PC-3 (cell line): ENCODE measurements at regions of chr1 and their contacts with region 1.

Region 1: DNA sequence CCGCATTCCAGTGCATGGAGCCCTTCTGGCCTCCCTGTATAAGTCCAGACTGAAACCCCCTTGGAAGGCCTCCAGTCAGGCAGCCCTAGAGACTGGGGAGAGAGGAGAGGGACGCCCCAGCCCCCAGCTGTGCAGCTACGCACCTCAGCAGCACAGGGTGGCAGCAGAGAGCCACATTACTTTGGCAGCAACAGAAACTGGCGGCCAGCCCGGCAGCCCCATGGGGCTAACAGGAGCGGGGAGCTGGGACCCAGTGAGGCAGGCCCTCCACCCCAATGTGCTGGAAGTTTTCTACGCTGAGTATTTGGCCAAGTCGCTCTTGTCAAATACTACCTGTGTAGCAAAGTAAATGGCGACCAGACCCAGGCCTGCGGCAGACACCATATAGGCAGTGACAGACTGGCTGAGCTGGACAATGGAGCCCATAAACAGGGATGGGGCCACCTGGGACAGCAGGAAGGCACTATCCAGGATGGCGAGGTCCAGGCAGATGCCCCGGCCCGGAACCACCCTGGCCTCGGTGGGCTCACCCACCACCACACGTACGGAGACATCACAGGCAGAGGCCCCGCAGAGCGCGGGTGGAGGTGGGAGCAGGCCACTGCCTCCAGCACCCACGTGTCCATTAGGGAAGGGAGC is 21.2 kb downstream of the SLC45A3 start:
- DNase-seq: peak; percentile 85
- ATAC-seq: peak; percentile 75
- H3K4me3 ChIP-seq: no peak overlapping the region
- H3K27ac ChIP-seq: no peak overlapping the region
- H3K4me1 ChIP-seq: peaks cover 8% of the 10 kb centered on the region
- H3K27me3 ChIP-seq: no peaks in the 10 kb centered on the region
- CTCF ChIP-seq: peak; percentile 97

Region 2: DNA sequence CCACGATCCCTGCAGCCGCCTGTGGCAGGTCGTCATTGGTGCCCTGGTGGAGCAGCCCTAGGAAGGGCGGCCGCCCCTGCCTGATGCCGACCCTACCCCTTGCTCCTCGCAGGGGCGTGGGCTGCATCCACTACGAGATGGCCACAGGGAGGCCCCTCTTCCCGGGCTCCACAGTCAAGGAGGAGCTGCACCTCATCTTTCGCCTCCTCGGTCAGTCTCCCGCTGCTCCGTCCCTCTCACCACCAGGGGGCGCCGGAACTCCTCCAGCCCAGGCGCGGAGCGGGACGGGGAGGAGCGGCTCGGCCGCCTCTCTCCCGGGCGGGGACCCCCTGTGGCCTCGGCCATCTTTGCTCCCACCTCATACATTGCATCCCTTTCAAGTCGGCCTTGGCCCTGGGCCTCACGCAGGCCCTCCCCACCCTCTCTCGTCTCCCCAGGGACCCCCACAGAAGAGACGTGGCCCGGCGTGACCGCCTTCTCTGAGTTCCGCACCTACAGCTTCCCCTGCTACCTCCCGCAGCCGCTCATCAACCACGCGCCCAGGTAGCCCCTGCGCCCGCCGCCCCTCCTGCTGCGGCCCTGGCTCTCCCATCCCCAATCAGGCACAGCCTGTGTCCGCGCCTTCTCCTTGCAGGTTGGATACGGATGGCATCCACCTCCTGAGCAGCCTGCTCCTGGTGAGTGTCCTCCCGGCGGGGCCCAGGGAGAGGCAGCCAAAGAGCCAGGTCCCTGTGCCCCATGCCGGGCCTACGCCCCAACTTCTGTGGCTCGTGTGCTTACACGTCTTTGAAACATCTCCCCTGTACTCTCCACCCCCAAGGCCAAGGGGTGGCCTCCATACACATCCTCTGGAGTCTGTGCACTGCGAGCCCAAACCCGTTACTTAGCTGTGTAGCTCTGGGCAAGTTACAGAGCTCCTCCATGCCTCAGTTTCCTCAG is 129.9 kb before region 1 on chr1:
- CTCF ChIA-PET with region 1: interaction called, 32 read pairs
- POLR2A ChIA-PET with region 1: no interaction called
- intact Hi-C with region 1: loop called (anchors 1 kb)
- DNase-seq: peak; percentile 92
- ATAC-seq: peak; percentile 94
- H3K4me3 ChIP-seq: peak overlapping the region; percentile 60
- H3K27ac ChIP-seq: no peak overlapping the region
- H3K4me1 ChIP-seq: peaks cover 12% of the 10 kb centered on the region
- H3K27me3 ChIP-seq: no peaks in the 10 kb centered on the region
- CTCF ChIP-seq: peak; percentile 97

Region 3: DNA sequence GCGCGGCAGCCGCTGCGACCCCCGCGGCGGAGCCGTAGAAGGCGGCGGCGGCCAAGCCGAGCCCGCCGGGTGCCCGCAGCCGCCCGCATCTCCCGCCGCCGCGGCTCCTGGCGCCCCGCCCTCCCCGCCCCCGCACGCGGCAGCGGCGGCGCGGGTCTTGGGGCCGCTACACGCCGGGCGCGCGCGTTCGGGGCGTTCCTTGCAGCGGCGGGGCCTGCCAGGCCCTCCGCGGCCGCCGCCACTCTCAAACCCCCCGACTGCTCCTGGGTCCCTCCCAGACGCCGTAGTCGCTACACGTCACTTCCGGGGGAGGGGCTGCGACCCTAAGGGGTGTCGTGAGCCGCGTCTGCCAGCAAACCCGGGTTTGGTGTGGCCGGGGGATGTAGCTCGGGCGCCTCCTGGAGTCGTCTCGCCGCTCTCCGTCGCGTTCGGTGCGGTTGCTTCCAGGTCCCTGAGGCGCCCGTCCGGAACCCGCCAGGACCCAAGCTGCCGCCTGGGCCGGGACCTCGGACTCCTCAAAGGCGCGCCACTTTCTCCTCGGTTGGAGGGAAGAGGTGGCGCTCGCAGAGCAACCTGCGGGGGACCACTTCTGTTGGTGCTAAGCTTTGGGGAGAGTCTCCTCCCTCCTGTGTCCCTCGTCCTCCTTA is 27.2 kb before region 1 on chr1 and contains the start of gene ELK4:
- CTCF ChIA-PET with region 1: interaction called, 10 read pairs
- POLR2A ChIA-PET with region 1: interaction called, 3 read pairs
- intact Hi-C with region 1: loop called (anchors 1 kb)
- DNase-seq: peak; percentile 99
- ATAC-seq: peak; percentile 79
- H3K4me3 ChIP-seq: peak within 1 kb of the TSS; percentile 86
- H3K27ac ChIP-seq: peak within 1 kb of the TSS; percentile 76
- H3K4me1 ChIP-seq: peaks cover 24% of the 10 kb centered on the region
- H3K27me3 ChIP-seq: no peaks in the 10 kb centered on the region
- CTCF ChIP-seq: peak; percentile 72
- total RNA-seq, gene ELK4: 16.3 and 16.4 TPM in 2 replicates

Region 4: GRCh38 chr1:205711104-205712020 is 52.3 kb after region 1 on chr1:
- CTCF ChIA-PET with region 1: interaction called, 70 read pairs
- POLR2A ChIA-PET with region 1: no interaction called
- intact Hi-C with region 1: loop called (anchors 1 kb)
- DNase-seq: peak; percentile 93
- ATAC-seq: peak; percentile 86
- H3K4me3 ChIP-seq: no peak overlapping the region
- H3K27ac ChIP-seq: no peak overlapping the region
- H3K4me1 ChIP-seq: peaks cover 9% of the 10 kb centered on the region; the same call in 1 of the 2 replicates
- H3K27me3 ChIP-seq: no peaks in the 10 kb centered on the region
- CTCF ChIP-seq: peak; percentile 99

Region 5: GRCh38 chr1:205750138-205751035 is 91.3 kb after region 1 on chr1 and contains the start of gene NUCKS1:
- CTCF ChIA-PET with region 1: no interaction called
- POLR2A ChIA-PET with region 1: no interaction called
- intact Hi-C with region 1: no loop called
- DNase-seq: peak; percentile 99
- ATAC-seq: peak; percentile 78
- H3K4me3 ChIP-seq: peak within 1 kb of the TSS; percentile 86
- H3K27ac ChIP-seq: peak within 1 kb of the TSS; percentile 81
- H3K4me1 ChIP-seq: peaks cover 25% of the 10 kb centered on the region
- H3K27me3 ChIP-seq: no peaks in the 10 kb centered on the region
- CTCF ChIP-seq: no peak
- total RNA-seq, gene NUCKS1: 101 and 122 TPM in 2 replicates

Region 6: DNA sequence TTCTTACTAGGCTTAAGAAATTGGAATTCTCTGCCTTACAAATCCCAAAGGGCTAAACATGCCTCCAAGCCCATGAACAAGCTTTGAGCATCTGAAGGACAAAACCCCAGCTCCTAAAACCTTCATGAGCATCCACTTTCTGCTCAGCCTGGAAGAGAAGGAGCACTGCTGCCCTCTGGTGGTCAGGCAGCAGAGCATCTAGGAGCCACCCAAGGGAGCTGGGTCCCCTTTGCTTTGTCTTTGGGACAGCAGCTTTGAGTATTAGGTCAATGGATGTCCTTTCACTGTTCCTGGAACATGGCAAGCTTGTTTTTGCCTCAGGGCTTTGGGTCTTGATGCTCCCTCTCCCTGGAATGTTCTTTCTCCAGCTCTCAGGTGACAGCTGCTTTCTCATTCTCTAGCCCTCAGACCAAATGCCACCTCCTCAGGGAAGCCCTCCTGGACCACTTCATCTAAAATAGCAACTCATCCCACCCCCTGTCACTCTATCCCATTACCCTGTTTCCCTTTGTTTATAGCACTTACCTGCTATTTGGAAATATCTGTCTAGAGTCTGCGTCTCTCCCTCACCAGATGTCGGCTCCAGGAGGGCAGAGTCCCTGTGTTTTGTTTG is 318.4 kb after region 1 on chr1:
- CTCF ChIA-PET with region 1: interaction called, 17 read pairs
- POLR2A ChIA-PET with region 1: no interaction called
- intact Hi-C with region 1: no loop called
- DNase-seq: peak; percentile 91
- ATAC-seq: peak; percentile 95
- H3K4me3 ChIP-seq: no peak overlapping the region
- H3K27ac ChIP-seq: no peak overlapping the region
- H3K4me1 ChIP-seq: no peaks in the 10 kb centered on the region
- H3K27me3 ChIP-seq: no peaks in the 10 kb centered on the region
- CTCF ChIP-seq: peak; percentile 99